Activated CD8-positive, alpha-beta T cell treated with anti-CD3 and anti-CD28 coated beads for 36 hours (primary cell): ENCODE measurements at regions of chr9 and their contacts with region 1.

Region 1: GRCh38 chr9:99184475-99185347 is 37.0 kb downstream of the ALG2 start:
- DNase-seq: peak; percentile 96
- ATAC-seq: peak; percentile 91
- H3K4me3 Mint-ChIP-seq: peak overlapping the region; percentile 20
- H3K27ac Mint-ChIP-seq: peak overlapping the region; percentile 84
- H3K4me1 Mint-ChIP-seq: peaks cover 57% of the 10 kb centered on the region
- H3K27me3 Mint-ChIP-seq: peaks cover 4% of the 10 kb centered on the region
- CTCF ChIP-seq: peak; percentile 89

Region 2: GRCh38 chr9:99103901-99104458 is 80.7 kb before region 1 on chr9:
- CTCF ChIA-PET with region 1: no interaction called
- POLR2A ChIA-PET with region 1: no interaction called
- intact Hi-C with region 1: no loop called
- DNase-seq: peak; percentile 37
- ATAC-seq: no peak
- H3K4me3 Mint-ChIP-seq: peak overlapping the region; percentile 78
- H3K27ac Mint-ChIP-seq: peak overlapping the region; percentile 86
- H3K4me1 Mint-ChIP-seq: peaks cover 45% of the 10 kb centered on the region
- H3K27me3 Mint-ChIP-seq: no peaks in the 10 kb centered on the region
- CTCF ChIP-seq: no peak

Region 3: GRCh38 chr9:99162759-99163364 is 21.8 kb before region 1 on chr9:
- CTCF ChIA-PET with region 1: interaction called, 76 read pairs
- POLR2A ChIA-PET with region 1: interaction called, 4 read pairs
- intact Hi-C with region 1: no loop called
- DNase-seq: peak; percentile 25
- ATAC-seq: peak; percentile 41
- H3K4me3 Mint-ChIP-seq: no peak overlapping the region
- H3K27ac Mint-ChIP-seq: no peak overlapping the region
- H3K4me1 Mint-ChIP-seq: peaks cover 42% of the 10 kb centered on the region
- H3K27me3 Mint-ChIP-seq: peaks cover 1% of the 10 kb centered on the region
- CTCF ChIP-seq: peak; percentile 88

Region 4: GRCh38 chr9:99221621-99222415 is 37.1 kb after region 1 on chr9 and contains the starts of genes ALG2 and SEC61B:
- CTCF ChIA-PET with region 1: interaction called, 27 read pairs
- POLR2A ChIA-PET with region 1: interaction called, 5 read pairs
- intact Hi-C with region 1: loop called (anchors 5 kb)
- DNase-seq: peak; percentile 98
- ATAC-seq: peak; percentile 93
- H3K4me3 Mint-ChIP-seq: peak within 1 kb of the TSS; percentile 99
- H3K27ac Mint-ChIP-seq: peak within 1 kb of the TSS; percentile 100
- H3K4me1 Mint-ChIP-seq: peaks cover 65% of the 10 kb centered on the region
- H3K27me3 Mint-ChIP-seq: no peaks in the 10 kb centered on the region
- CTCF ChIP-seq: no peak
- total RNA-seq, gene ALG2: 24.1 to 27.0 TPM
- total RNA-seq, gene SEC61B: 140 to 149 TPM

Region 5: DNA sequence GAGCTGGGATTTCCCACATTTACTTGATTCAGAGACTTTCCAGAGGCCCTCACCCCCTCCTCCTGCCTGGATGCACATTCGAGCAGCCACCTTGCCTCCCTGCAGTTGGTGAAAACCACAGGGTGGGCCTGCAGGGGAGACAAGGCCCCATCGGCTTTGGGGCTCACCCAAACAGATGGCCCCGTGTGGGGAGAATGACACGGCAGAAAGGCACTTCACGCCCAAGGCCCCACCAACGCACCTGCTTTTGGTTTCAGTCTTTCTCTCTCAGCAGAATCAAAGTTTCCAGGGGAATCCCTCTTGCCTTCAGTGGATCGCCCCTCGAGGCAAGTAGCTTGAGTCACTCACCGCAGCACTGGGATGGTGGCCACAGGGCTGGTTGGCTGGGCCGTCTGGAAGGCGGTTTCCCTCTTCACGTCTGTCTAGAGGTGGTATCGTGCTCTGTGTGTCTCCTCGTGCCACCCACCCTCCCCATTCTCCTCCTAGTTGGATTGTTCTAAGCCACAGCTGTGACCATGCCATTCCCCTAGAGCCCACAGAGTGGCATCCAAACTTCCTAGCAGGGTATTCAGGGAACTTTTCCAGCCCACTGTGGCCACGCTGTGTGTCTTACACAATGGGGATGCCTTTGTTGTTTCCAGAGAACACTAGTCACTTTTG is 69.2 kb after region 1 on chr9:
- CTCF ChIA-PET with region 1: interaction called, 13 read pairs
- POLR2A ChIA-PET with region 1: interaction called, 4 read pairs
- intact Hi-C with region 1: loop called (anchors 2 kb)
- DNase-seq: peak; percentile 98
- ATAC-seq: peak; percentile 82
- H3K4me3 Mint-ChIP-seq: peak overlapping the region; percentile 46
- H3K27ac Mint-ChIP-seq: peak overlapping the region; percentile 95
- H3K4me1 Mint-ChIP-seq: peaks cover 40% of the 10 kb centered on the region
- H3K27me3 Mint-ChIP-seq: peaks cover 9% of the 10 kb centered on the region
- CTCF ChIP-seq: no peak

Region 6: GRCh38 chr9:99266255-99267023 is 81.7 kb after region 1 on chr9:
- CTCF ChIA-PET with region 1: interaction called, 20 read pairs
- POLR2A ChIA-PET with region 1: no interaction called
- intact Hi-C with region 1: no loop called
- DNase-seq: peak; percentile 86
- ATAC-seq: peak; percentile 90
- H3K4me3 Mint-ChIP-seq: peak overlapping the region; percentile 6
- H3K27ac Mint-ChIP-seq: no peak overlapping the region
- H3K4me1 Mint-ChIP-seq: peaks cover 27% of the 10 kb centered on the region
- H3K27me3 Mint-ChIP-seq: peaks cover 3% of the 10 kb centered on the region
- CTCF ChIP-seq: peak; percentile 97

Region 7: GRCh38 chr9:100011062-100011681 is 826.5 kb after region 1 on chr9:
- CTCF ChIA-PET with region 1: interaction called, 5 read pairs
- POLR2A ChIA-PET with region 1: no interaction called
- intact Hi-C with region 1: loop called (anchors 10 kb)
- DNase-seq: peak; percentile 46
- ATAC-seq: no peak
- H3K4me3 Mint-ChIP-seq: no peak overlapping the region
- H3K27ac Mint-ChIP-seq: no peak overlapping the region
- H3K4me1 Mint-ChIP-seq: no peaks in the 10 kb centered on the region
- H3K27me3 Mint-ChIP-seq: no peaks in the 10 kb centered on the region
- CTCF ChIP-seq: peak; percentile 92